Posterior vena cava (tissue), 2 donors: ENCODE measurements at regions of chr9 and their contacts with region 1.

Region 1: GRCh38 chr9:104961238-104961637 is 33.3 kb upstream of the ABCA1 start:
- DNase-seq: no peak

Region 2: DNA sequence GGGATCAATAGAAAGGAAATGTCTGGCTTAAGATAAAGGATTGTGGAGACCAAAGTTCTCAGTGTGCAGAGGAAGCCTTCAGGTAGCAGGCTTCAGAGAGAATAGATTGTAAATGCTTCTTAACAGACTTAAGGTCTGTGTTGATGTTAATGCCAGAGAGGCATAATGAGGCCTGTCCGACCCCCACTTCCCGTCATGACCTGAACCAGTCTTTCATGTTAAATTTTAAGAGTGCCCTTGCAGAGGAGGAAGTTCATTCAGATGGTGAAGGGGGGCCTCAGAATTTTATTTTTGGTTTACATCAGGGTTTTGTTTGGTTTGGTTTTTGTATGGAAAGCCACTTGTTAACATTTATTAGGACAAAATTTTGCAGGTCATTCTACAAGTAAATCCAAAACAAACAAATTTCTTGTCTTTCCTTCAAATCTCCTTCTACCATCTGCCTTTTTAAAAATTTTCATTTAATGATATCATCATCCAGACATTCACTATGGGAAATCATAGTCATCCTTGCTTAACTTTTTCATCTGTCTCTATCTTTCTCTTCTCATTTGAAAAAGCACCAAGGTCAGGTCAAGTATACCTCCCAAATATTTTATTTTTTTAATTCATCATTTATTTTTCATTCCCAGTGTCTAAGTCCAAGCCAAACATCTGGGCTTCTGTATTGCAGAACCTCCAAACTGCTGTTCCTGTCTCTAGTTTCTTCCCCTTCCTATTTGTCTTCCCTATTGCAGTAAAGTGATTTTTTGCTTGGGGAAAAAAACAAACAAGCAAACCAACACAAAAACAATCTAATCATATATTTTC is 26.3 kb before region 1 on chr9:
- intact Hi-C with region 1: loop called (anchors 1 to 5 kb)
- DNase-seq: no peak

Region 3: DNA sequence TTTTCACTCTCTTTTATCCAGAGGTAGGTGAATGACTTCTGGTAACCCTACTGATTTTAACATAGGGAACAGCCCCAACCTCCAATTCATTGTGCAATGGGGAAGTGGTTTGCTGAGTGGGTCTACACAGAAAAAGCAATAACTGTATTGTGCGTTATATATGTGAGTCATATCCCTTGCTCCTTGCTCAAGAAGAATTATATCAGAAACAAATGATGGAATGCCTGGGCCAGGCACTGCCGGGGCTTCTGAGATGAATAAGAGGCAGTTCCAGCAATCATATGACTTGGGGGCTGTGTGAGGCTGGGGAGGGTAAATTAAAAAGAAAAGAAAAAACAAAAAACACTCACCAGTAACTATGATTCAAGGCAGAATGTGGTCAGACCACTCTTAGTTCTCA is 45.9 kb after region 1 on chr9:
- intact Hi-C with region 1: no loop called
- DNase-seq: no peak

Region 4: GRCh38 chr9:105226055-105226454 is 264.8 kb after region 1 on chr9:
- intact Hi-C with region 1: loop called in 1 of 2 experiments (anchors 2 kb)
- DNase-seq: no peak